ENCODE measurements at regions of chr12 and their contacts with region 1.

Region 1: GRCh38 chr12:123938679-123939480 is 33.8 kb downstream of the CCDC92 start:
- DNase-seq: no peak
- H3K4me3 ChIP-seq: no peak overlapping the region
- CTCF ChIP-seq: peak; percentile 58

Region 2: DNA sequence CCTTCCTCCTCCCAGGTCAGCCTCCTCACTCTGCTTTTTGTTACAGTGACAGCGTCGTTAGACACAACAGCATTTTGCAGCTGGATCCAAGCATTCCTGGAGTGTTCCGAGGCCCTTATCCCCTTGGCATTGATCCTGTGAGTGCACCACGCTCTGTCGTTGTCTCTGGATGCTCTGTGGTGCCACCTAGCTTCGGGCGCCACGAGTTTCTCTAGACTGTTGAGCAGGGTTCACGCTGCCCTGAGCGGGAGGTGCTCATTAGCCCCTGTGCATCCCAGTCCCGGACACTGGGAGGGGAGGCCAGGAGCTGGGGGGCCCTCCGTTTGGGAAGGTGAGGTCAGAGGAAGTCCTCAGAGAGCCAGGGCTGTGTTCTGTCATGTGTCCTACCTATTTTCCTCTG is 194.0 kb before region 1 on chr12:
- CTCF ChIA-PET with region 1: no interaction called
- POLR2A ChIA-PET with region 1: no interaction called
- DNase-seq: no peak
- H3K4me3 ChIP-seq: no peak overlapping the region
- CTCF ChIP-seq: no peak

Region 3: DNA sequence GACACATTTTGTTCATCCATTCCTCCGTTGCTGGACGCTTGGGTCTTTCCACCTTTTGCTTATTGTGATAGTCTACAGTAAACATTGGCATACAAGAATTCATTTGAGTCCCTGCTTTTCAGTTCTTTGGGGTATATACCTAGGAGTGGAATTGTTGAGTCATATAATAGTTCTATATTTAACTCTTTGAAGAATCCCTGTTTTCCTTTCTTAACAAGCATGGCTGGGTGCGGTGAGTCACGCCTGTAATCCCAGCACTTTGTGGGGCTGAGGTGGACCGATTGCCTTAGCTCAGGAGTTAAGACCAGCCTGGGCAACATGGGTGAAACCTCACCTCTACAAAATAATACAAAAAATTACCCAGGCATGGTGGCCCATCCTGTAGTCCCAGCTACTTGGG is 41.7 kb before region 1 on chr12:
- CTCF ChIA-PET with region 1: no interaction called
- POLR2A ChIA-PET with region 1: no interaction called
- DNase-seq: peak; percentile 56
- H3K4me3 ChIP-seq: peak overlapping the region; percentile 35
- CTCF ChIP-seq: no peak

Region 4: GRCh38 chr12:123928274-123928865 is 10.5 kb before region 1 on chr12:
- CTCF ChIA-PET with region 1: interaction called, 11 read pairs
- POLR2A ChIA-PET with region 1: no interaction called
- DNase-seq: no peak
- H3K4me3 ChIP-seq: no peak overlapping the region
- CTCF ChIP-seq: no peak

Measured in AG04449 (cell line).